Naive thymus-derived CD4-positive, alpha-beta T cell (primary cell): ENCODE measurements at regions of chr5 and their contacts with region 1.

Region 1: GRCh38 chr5:180470966-180471582 is 23.1 kb upstream of the CNOT6 start:
- DNase-seq: peak; percentile 14 to 61 (median 50)
- ATAC-seq: peak; percentile 88
- H3K4me3 ChIP-seq: no peak overlapping the region
- H3K4me3 Mint-ChIP-seq: no peak overlapping the region
- H3K27ac ChIP-seq: no peak overlapping the region
- H3K27ac Mint-ChIP-seq: no peak overlapping the region
- H3K4me1 ChIP-seq: no peaks in the 10 kb centered on the region
- H3K4me1 Mint-ChIP-seq: peaks cover 0 to 2% (median 0%) of the 10 kb centered on the region in 7 donors
- H3K27me3 ChIP-seq: no peaks in the 10 kb centered on the region
- H3K27me3 Mint-ChIP-seq: peaks cover 0 to 13% (median 6%) of the 10 kb centered on the region in 5 donors

Region 2: DNA sequence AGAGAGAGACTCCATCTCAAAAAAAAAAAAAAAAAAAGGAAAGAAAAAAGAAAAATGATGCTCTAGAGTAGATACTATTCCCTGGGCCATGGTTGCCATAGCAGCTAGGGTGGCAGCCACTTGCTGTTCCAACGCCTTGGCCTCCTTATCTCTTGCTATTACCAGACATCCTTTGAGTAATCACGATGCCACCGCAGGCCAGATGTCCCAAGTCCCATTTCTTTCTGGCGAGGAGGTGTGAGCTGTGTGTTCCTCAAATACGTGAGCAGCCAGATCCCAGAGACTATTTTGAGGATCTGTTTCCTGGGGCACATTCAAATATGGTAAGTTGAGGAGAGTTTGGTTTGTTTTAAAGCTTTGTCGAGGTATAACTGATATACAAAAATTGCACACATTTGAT is 94.6 kb before region 1 on chr5:
- CTCF ChIA-PET with region 1: no interaction called
- POLR2A ChIA-PET with region 1: no interaction called
- intact Hi-C with region 1: no loop called
- DNase-seq: no peak
- ATAC-seq: no peak
- H3K4me3 ChIP-seq: no peak overlapping the region
- H3K4me3 Mint-ChIP-seq: no peak overlapping the region
- H3K27ac ChIP-seq: no peak overlapping the region
- H3K27ac Mint-ChIP-seq: no peak overlapping the region
- H3K4me1 ChIP-seq: no peaks in the 10 kb centered on the region
- H3K4me1 Mint-ChIP-seq: no peaks in the 10 kb centered on the region
- H3K27me3 ChIP-seq: no peaks in the 10 kb centered on the region
- H3K27me3 Mint-ChIP-seq: no peaks in the 10 kb centered on the region

Region 3: DNA sequence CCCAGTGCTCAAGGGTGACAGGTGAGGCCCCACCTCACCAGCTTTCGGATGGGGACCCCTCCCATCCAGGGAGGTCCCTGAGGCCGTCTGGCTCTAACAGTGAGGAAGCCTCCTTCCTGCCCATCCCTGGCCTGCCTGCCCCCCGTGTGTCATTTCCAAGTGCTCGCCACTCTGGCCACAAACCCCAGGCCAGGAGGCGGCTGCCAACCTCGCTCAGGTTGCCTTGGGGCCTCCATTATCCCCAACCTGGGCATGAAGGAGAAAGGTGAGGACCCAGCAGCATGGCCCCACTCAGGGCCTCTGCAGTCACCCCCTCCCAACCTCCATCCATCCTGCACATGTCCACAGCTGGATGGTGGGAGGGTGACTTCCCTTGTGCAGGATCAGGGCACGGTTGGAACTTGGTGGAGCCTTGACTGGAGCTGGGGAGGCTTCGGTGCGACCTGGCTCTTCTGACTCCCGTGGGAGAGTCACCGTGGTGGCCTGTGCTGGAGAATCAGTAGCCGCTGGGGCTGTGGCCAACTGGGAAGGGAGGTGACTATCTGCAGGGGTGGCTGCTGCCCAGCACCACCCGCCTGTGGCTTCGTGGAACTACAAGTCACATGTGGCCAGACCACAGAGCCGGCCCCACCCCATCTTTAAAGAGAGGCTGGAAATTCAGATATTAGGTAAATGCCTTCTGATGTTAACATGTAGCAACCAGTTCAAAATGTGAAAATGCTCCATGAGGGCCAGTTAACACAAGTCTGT is 80.5 kb before region 1 on chr5:
- CTCF ChIA-PET with region 1: no interaction called
- POLR2A ChIA-PET with region 1: no interaction called
- intact Hi-C with region 1: loop called in 1 of 2 experiments (anchors 10 kb)
- DNase-seq: no peak
- ATAC-seq: no peak
- H3K4me3 ChIP-seq: no peak overlapping the region
- H3K4me3 Mint-ChIP-seq: no peak overlapping the region
- H3K27ac ChIP-seq: no peak overlapping the region
- H3K27ac Mint-ChIP-seq: no peak overlapping the region
- H3K4me1 ChIP-seq: no peaks in the 10 kb centered on the region
- H3K4me1 Mint-ChIP-seq: peaks cover 0 to 3% (median 0%) of the 10 kb centered on the region in 7 donors
- H3K27me3 ChIP-seq: no peaks in the 10 kb centered on the region
- H3K27me3 Mint-ChIP-seq: peaks cover 0 to 11% (median 3%) of the 10 kb centered on the region in 5 donors

Region 4: DNA sequence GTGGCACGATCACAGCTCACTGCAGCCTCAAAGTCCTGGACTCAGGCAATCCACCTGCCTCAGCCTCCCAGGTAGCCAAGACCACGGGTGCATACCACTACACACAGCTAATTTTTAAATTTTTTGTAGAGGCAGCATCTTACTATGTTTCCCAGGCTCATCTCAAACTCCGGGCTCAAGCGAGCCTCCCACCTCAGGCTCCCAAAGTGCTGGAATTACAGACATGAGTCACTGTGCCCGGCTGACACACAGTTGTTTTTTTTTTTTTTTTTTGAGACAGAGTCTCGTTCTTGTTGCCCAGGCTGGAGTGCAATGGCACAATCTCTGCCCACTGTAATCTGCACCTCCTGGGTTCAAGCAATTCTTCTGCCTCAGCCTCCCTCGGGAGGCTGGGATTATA is 47.0 kb before region 1 on chr5:
- CTCF ChIA-PET with region 1: no interaction called
- POLR2A ChIA-PET with region 1: no interaction called
- intact Hi-C with region 1: no loop called
- DNase-seq: no peak
- ATAC-seq: no peak
- H3K4me3 ChIP-seq: no peak overlapping the region
- H3K4me3 Mint-ChIP-seq: no peak overlapping the region
- H3K27ac ChIP-seq: no peak overlapping the region
- H3K27ac Mint-ChIP-seq: no peak overlapping the region
- H3K4me1 ChIP-seq: no peaks in the 10 kb centered on the region
- H3K4me1 Mint-ChIP-seq: peaks cover 0 to under 1% (median 0%) of the 10 kb centered on the region in 7 donors
- H3K27me3 ChIP-seq: no peaks in the 10 kb centered on the region
- H3K27me3 Mint-ChIP-seq: peaks cover 0 to 7% (median 0%) of the 10 kb centered on the region in 5 donors

Region 5: DNA sequence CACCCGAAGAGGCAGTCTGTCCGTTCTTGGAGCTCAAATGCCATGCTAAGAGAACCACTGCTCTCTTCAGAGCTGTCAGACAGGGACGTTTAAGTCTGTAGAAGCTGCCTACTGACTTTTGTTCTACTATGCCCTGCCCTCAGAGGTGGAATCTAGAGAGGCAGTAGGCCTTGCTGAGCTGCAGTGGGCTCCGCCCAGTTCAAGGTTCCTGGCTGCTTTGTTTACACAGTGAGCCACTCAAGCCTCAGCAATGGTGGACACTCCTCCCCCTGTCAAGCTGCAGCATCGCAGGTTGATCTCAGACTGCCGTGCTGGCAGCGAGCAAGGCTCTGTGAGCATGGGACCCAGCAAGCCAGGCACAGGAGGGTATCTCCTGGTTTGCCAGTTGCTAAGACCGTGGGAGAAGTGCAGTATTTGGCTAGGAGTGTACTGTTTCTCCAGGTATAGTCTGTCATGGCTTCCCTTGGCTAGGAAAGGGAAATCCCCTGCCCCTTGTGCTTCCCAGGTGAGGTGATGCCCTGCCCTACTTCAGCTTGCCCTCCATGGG is 414.9 kb after region 1 on chr5:
- CTCF ChIA-PET with region 1: no interaction called
- POLR2A ChIA-PET with region 1: no interaction called
- intact Hi-C with region 1: no loop called
- DNase-seq: no peak
- ATAC-seq: no peak
- H3K4me3 ChIP-seq: no peak overlapping the region
- H3K4me3 Mint-ChIP-seq: no peak overlapping the region
- H3K27ac ChIP-seq: no peak overlapping the region
- H3K27ac Mint-ChIP-seq: no peak overlapping the region
- H3K4me1 ChIP-seq: no peaks in the 10 kb centered on the region
- H3K4me1 Mint-ChIP-seq: peaks cover 0 to 2% (median 0%) of the 10 kb centered on the region in 7 donors
- H3K27me3 ChIP-seq: peaks cover 0 to 2% of the 10 kb centered on the region in 2 donors
- H3K27me3 Mint-ChIP-seq: peaks cover 37 to 67% (median 53%) of the 10 kb centered on the region in 5 donors

Region 6: DNA sequence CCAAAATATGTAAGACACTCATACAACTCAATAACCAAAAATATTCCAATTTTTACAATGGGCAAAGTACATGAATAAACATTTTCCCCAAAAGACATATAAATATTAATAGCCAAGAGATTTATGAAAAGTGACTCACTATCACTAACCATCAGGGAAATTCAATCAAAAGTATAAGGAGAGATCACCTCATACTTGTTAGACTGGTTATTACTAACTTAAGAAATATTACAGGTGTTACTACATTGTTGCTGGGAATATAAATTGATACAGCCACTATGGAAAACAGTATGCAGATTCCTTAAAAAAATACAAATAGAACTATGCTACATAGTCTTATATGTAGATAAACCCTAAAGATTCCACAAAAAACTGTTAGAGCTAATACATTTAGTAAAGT is 449.6 kb after region 1 on chr5:
- CTCF ChIA-PET with region 1: no interaction called
- POLR2A ChIA-PET with region 1: no interaction called
- intact Hi-C with region 1: no loop called
- DNase-seq: no peak
- ATAC-seq: no peak
- H3K4me3 ChIP-seq: no peak overlapping the region
- H3K4me3 Mint-ChIP-seq: no peak overlapping the region
- H3K27ac ChIP-seq: no peak overlapping the region
- H3K27ac Mint-ChIP-seq: no peak overlapping the region
- H3K4me1 ChIP-seq: no peaks in the 10 kb centered on the region
- H3K4me1 Mint-ChIP-seq: peaks cover 0 to 1% (median 0%) of the 10 kb centered on the region in 7 donors
- H3K27me3 ChIP-seq: no peaks in the 10 kb centered on the region
- H3K27me3 Mint-ChIP-seq: peaks cover 10 to 38% (median 30%) of the 10 kb centered on the region in 5 donors